ENCODE measurements at regions of chr4 and their contacts with region 1.

Region 1: DNA sequence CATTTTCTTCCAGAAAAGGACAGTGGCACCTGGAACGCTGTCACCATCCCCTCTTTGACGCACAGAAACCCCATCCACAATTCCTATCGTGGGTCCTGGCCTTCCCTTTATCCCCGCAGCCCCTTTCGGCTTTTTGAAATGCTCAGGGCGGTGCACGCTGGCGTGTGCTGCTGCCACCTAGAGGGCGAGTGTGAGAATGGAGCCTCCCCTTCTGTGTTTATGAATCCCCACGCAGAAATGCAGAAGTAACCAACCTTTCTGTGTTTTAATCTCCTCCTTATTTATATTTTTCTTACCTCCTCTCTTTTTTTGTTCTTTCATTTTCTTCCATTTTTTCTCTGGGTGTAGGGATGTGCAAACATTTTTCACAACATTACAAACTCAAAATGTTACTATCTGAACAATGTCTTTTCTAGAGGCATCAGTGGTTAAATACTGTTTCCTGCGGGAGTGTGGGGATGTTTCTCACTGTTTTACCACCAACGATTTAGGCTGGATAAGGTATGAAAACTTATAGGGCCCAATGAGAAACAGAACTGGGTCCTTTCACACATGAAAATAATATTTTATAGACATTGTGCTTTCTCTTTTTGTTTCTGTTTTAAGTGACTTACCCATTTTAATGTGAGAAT is 50.0 kb downstream of the TMA16 start:
- DNase-seq: peak; percentile 62
- H3K4me3 ChIP-seq: peak overlapping the region in 3 of 4 donors; percentile 5 to 33 (median 13)
- H3K27ac ChIP-seq: no peak overlapping the region
- H3K4me1 ChIP-seq: no peaks in the 10 kb centered on the region
- H3K27me3 ChIP-seq: no peaks in the 10 kb centered on the region
- CTCF ChIP-seq: peak; percentile 74 to 91 (median 88)
- EP300 ChIP-seq: no peak
- POLR2A ChIP-seq: no peak

Region 2: GRCh38 chr4:162497564-162498167 is 1046.9 kb before region 1 on chr4:
- in situ Hi-C with region 1: loop called in 1 of 4 experiments (anchors 25 kb)
- intact Hi-C with region 1: no loop called
- DNase-seq: no peak
- H3K4me3 ChIP-seq: no peak overlapping the region
- H3K27ac ChIP-seq: no peak overlapping the region
- H3K4me1 ChIP-seq: no peaks in the 10 kb centered on the region
- H3K27me3 ChIP-seq: no peaks in the 10 kb centered on the region
- CTCF ChIP-seq: peak; percentile 78 to 84 (median 82)
- EP300 ChIP-seq: no peak
- POLR2A ChIP-seq: no peak

Region 3: GRCh38 chr4:163107754-163108153 is 436.8 kb before region 1 on chr4:
- in situ Hi-C with region 1: loop called in 1 of 4 experiments (anchors 25 kb)
- intact Hi-C with region 1: no loop called
- DNase-seq: no peak
- H3K4me3 ChIP-seq: no peak overlapping the region
- H3K27ac ChIP-seq: no peak overlapping the region
- H3K4me1 ChIP-seq: no peaks in the 10 kb centered on the region
- H3K27me3 ChIP-seq: no peaks in the 10 kb centered on the region
- CTCF ChIP-seq: peak in 3 of 5 experiments; percentile 19 to 27 (median 22)
- EP300 ChIP-seq: no peak
- POLR2A ChIP-seq: no peak

Region 4: DNA sequence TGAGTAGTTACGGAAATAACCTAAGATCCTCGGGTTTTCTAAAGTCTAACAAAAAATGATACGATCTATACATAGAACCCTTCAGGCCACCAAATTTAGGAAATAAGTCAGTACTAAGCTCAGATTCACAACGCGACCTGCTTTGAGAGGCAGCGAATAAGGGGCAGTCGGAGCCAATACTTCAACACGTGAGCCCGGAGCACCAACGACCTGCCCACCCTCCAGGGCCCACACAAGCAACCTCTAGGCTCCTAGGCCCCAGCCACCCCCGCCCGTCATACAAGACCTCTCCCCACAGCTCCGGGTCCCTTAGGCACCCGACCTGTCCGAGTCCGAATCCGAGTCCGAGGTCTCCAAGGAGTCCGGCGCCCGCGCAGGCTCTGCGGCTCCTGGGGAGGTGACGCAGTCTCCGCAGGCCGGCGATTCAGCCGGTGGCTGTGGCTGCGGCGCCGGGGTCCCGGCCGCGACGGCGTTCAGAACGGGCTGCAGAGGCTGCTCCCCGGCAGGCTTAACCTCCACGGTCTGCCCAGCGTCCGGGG is 378.4 kb before region 1 on chr4:
- in situ Hi-C with region 1: loop called in 3 of 4 experiments (anchors 25 kb)
- intact Hi-C with region 1: no loop called
- DNase-seq: peak; percentile 47
- H3K4me3 ChIP-seq: peak overlapping the region; percentile 69 to 90 (median 80)
- H3K27ac ChIP-seq: peak overlapping the region; percentile 86 to 95 (median 92)
- H3K4me1 ChIP-seq: peaks cover 7 to 24% (median 20%) of the 10 kb centered on the region in 4 donors
- H3K27me3 ChIP-seq: no peaks in the 10 kb centered on the region
- CTCF ChIP-seq: no peak
- EP300 ChIP-seq: no peak
- POLR2A ChIP-seq: no peak

Region 5: DNA sequence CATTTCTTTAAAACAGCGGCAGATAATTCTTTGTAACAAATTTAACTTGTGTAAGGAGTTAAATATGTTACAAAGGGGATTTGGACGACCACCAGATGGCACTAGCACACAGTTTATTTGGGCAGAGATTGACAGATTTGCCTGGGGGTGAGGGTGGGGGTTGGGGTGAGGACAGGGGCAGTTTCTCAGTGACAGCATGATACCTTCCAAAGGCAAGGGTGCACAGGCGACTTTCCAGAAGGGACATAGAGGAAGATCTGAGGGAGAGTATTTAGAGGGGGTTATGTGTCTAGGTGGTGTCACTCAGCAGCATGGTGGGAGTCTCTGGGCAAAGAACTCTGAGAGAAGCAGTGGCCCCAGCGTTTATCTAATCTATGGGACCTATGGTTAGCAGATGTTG is 59.6 kb before region 1 on chr4:
- in situ Hi-C with region 1: loop called in 2 of 4 experiments (anchors 10 kb)
- intact Hi-C with region 1: loop called (anchors 5 kb)
- DNase-seq: peak; percentile 39
- H3K4me3 ChIP-seq: no peak overlapping the region
- H3K27ac ChIP-seq: no peak overlapping the region
- H3K4me1 ChIP-seq: no peaks in the 10 kb centered on the region
- H3K27me3 ChIP-seq: no peaks in the 10 kb centered on the region
- CTCF ChIP-seq: peak; percentile 35 to 53 (median 46)
- EP300 ChIP-seq: no peak
- POLR2A ChIP-seq: no peak

Region 6: GRCh38 chr4:163494360-163495162 is 50.0 kb before region 1 on chr4 and contains the start of gene TMA16:
- in situ Hi-C with region 1: loop called in 2 of 4 experiments (anchors 10 kb)
- intact Hi-C with region 1: loop called (anchors 5 kb)
- DNase-seq: peak; percentile 88
- H3K4me3 ChIP-seq: peak within 1 kb of the TSS; percentile 63 to 80 (median 68)
- H3K27ac ChIP-seq: peak within 1 kb of the TSS; percentile 81 to 92 (median 90)
- H3K4me1 ChIP-seq: peaks cover 3 to 37% (median 11%) of the 10 kb centered on the region in 4 donors
- H3K27me3 ChIP-seq: no peaks in the 10 kb centered on the region
- CTCF ChIP-seq: no peak
- EP300 ChIP-seq: no peak
- POLR2A ChIP-seq: peak; percentile 70
- total RNA-seq, gene TMA16: 7.1 to 27.2 (median 16.4) TPM